Cardiac septum (tissue), 1 donor: ENCODE measurements at regions of chr12 and their contacts with region 1.

Region 1: DNA sequence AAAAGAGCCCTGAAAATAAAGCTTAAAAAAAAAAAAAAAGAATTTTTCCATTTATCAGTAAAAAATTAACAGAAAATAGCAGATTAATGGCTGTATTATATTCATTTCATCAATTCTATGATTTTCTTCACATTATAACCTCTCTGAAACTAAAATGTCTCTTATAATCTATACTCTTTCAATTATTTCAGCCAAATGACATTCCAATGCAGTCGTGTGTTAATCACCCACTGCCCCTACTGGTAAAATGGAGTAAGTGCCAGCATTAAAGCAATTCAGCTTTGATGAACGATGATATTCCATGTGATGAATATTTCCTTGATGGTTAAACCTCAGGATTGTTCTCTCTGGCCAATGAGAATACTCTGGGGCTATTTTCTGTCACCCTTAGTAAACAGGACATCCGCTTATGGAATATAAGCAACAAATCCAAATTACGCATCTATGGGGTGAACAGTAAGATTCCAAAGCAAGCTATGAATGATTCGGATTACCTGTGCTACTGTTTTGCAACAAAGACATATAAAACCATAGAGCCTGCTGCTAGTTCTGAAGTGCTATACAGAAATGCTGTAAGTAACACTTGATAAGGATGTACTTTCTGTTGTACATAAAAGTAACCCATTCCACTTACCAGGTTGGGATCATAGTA is 20.3 kb upstream of the SYCP3 start:
- DNase-seq: no peak

Region 2: GRCh38 chr12:101108130-101108529 is 651.4 kb before region 1 on chr12:
- intact Hi-C with region 1: no loop called
- DNase-seq: no peak

Region 3: DNA sequence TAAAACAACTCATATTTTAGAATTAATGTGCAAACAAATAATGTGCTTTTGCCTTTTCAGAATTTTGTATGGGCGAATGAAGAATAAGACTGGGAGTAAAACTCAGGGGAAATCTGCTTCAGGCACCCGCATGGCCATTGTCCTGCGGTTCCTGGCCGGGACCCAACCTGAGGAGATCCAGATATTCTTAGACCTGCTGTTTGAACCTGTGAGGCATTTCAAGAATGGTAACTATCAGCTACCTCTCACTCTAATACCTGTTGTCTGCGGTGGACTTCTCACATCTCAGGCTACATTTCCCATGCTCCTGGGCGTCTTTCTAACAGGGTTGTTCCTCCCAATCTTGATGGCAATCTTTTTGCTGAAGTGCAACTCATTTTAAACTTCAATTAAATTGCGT is 432.5 kb before region 1 on chr12:
- intact Hi-C with region 1: no loop called
- DNase-seq: no peak

Region 4: GRCh38 chr12:101414533-101415119 is 344.9 kb before region 1 on chr12:
- intact Hi-C with region 1: loop called (anchors 10 kb)
- DNase-seq: no peak

Region 5: DNA sequence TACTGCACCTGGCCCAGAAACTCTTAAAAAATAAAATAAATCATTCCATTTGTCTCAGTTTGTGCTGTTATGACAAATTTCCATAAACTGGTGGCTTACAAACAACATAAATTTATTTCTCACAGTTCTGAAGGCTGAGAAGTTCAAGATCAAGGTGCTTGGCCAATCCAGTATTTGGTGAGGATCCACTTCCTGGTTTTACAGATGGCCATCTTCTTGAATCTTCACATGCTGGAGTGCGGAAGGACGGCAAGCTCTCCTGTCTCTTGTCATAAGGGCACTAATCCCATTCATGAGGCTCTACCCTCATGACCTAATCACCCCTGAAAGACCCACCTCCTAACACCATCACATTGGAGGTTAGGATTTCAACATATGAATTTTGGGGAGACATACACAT is 194.6 kb before region 1 on chr12:
- intact Hi-C with region 1: loop called (anchors 10 kb)
- DNase-seq: no peak